Gastrocnemius medialis (tissue), 4 donors: ENCODE measurements at regions of chr7 and their contacts with region 1.

Region 1: GRCh38 chr7:157357129-157358040 is 20.6 kb downstream of the DNAJB6 start:
- DNase-seq: peak in 1 of 2 donors; percentile 11
- ATAC-seq: no peak
- H3K4me3 ChIP-seq: no peak overlapping the region
- H3K27ac ChIP-seq: peak overlapping the region; percentile 96 to 100 (median 96)
- H3K4me1 ChIP-seq: peaks cover 91 to 99% of the 10 kb centered on the region in 2 donors
- H3K27me3 ChIP-seq: no peaks in the 10 kb centered on the region
- CTCF ChIP-seq: no peak
- POLR2A ChIP-seq: no peak

Region 2: GRCh38 chr7:157386979-157387800 is 29.8 kb after region 1 on chr7:
- in situ Hi-C with region 1: no loop called
- intact Hi-C with region 1: loop called (anchors 2 kb)
- DNase-seq: peak; percentile 76 to 87
- ATAC-seq: peak; percentile 84 to 88
- H3K4me3 ChIP-seq: no peak overlapping the region
- H3K27ac ChIP-seq: peak overlapping the region; percentile 72 to 77 (median 74)
- H3K4me1 ChIP-seq: peaks cover 30 to 34% of the 10 kb centered on the region in 2 donors
- H3K27me3 ChIP-seq: no peaks in the 10 kb centered on the region
- CTCF ChIP-seq: peak; percentile 87 to 95 (median 90)
- POLR2A ChIP-seq: no peak

Region 3: DNA sequence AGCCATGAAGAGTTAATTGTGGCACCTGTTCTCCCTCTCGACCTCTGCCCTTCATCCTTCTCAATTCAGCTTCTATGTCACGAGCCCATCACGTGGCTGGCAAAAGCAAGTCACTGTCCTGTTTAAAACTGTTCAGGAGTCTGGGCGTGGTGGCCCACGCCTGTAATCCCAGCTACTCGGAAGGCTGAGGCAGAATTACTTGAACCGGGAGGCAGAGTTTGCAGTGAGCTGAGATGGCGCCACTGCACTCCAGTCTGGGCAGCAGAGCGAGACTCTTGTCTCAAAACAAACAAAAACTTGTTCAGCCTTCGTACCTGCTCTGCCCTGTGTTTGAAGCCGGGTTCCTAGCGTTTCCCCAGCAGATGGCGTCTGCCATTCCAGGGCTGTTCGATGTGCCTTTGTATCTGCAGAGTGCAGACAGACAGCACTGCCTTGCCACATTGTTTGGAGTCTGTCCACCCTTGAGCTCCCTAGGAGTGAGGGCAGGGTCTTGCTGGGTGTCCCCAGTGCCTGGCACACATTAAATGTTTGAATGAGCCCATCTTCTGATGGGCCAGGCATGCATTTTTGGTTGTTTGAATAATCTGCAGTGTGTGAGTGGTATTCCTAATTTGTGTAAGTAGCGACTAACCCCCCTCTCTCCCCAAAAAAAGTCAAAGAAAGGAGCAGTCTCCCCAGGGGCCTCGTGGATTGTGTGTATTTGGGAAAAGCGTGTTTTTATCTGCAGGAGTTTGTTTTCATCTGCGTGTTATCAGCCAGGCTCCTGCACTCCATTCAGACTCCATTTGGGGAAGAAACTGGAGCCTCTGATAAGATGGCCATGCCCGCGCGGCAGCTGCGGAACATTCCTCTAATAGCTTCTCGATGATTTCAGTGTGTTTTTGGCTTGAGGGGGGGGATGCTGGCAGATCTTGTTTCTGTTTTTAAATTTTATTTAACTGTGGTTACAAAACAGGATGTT is 40.6 kb after region 1 on chr7:
- in situ Hi-C with region 1: no loop called
- intact Hi-C with region 1: loop called (anchors 2 kb)
- DNase-seq: peak; percentile 74 to 90
- ATAC-seq: peak; percentile 77 to 82
- H3K4me3 ChIP-seq: peak overlapping the region; percentile 4 to 47 (median 23)
- H3K27ac ChIP-seq: peak overlapping the region; percentile 80 to 94 (median 88)
- H3K4me1 ChIP-seq: peaks cover 35 to 72% of the 10 kb centered on the region in 2 donors
- H3K27me3 ChIP-seq: no peaks in the 10 kb centered on the region
- CTCF ChIP-seq: peak in 4 of 5 experiments; percentile 22 to 45 (median 30)
- POLR2A ChIP-seq: peak; percentile 37 to 49